Activated CD8-positive, alpha-beta T cell treated with anti-CD3 and anti-CD28 coated beads for 36 hours (primary cell): ENCODE measurements at regions of chr1 and their contacts with region 1.

Region 1: GRCh38 chr1:184805667-184806295 is 51.1 kb upstream of the EDEM3 start:
- DNase-seq: peak; percentile 91
- ATAC-seq: peak; percentile 97
- H3K4me3 Mint-ChIP-seq: no peak overlapping the region
- H3K27ac Mint-ChIP-seq: no peak overlapping the region
- H3K4me1 Mint-ChIP-seq: peaks cover 6% of the 10 kb centered on the region
- H3K27me3 Mint-ChIP-seq: no peaks in the 10 kb centered on the region
- CTCF ChIP-seq: peak; percentile 93

Region 2: DNA sequence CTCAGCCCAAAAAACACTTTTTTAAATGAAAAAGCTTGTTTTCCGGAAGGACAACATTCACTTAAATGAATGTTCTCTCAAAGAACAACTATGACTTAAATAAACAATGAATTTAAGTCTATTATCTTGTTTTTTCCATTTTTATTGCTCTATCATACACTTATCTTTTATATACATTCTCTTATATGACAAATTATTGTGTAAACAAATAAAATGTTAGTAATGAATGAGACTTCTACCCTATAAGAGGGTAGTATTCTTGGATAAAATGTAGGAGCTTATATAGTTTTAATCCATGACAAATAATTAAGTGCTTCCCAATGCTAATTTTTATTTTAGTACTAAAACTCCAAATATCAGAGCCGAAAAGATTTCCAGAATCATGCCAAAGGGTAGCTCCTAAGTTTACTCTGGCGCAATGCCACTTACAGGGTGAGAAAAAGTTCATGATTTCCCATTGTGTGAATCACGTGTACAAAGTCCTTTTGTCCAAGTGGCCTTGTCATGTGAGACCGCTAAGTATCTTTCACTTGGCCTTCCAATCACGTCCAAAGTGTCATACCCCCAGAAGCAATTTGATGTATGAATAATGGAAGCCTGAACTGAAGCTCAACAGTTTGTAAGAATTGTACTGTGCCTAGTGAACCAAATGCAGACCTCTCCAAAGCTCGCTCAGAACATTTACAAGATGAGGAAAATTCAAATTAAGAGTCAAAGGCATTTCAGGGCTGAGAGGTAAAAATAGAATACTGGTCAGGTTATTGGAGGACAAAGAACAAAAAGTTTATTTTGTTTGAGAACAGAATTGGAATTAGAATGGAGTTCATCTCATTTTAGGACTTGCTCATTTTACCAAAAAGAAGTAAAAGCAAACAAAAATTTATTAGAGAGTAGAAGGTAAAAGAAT is 475.6 kb before region 1 on chr1:
- CTCF ChIA-PET with region 1: no interaction called
- POLR2A ChIA-PET with region 1: no interaction called
- intact Hi-C with region 1: no loop called
- DNase-seq: no peak
- ATAC-seq: no peak
- H3K4me3 Mint-ChIP-seq: no peak overlapping the region
- H3K27ac Mint-ChIP-seq: no peak overlapping the region
- H3K4me1 Mint-ChIP-seq: no peaks in the 10 kb centered on the region
- H3K27me3 Mint-ChIP-seq: peaks cover 8% of the 10 kb centered on the region
- CTCF ChIP-seq: no peak

Region 3: DNA sequence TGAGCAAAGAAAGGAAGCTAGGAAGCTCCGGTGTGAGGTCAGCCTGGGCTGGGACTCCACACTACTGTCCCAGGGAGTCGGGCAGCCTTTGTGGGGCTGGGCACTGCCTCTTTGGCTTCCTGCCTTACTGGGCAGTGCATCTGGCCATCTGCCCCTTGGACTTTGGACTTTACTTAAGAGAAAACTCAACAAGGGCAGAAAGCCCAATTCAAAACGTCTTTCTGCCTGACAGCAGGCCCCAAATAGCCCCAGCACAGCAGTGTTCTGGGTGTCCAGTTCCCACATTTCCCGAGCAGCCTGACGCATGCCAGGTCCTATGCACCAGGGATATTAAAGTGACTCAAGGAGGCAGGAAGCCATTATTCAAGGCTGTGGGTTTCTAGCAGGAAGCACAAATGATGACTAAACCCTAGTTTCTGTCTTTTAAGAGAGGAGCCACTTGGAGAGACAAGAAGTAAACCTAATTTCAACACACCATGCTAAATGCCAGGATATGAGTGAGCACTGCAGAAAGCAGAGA is 13.3 kb before region 1 on chr1:
- CTCF ChIA-PET with region 1: interaction called, 18 read pairs
- POLR2A ChIA-PET with region 1: no interaction called
- intact Hi-C with region 1: no loop called
- DNase-seq: peak; percentile 12
- ATAC-seq: peak; percentile 89
- H3K4me3 Mint-ChIP-seq: no peak overlapping the region
- H3K27ac Mint-ChIP-seq: no peak overlapping the region
- H3K4me1 Mint-ChIP-seq: peaks cover 21% of the 10 kb centered on the region
- H3K27me3 Mint-ChIP-seq: no peaks in the 10 kb centered on the region
- CTCF ChIP-seq: no peak

Region 4: GRCh38 chr1:184892116-184892515 is 86.3 kb after region 1 on chr1:
- CTCF ChIA-PET with region 1: interaction called, 14 read pairs
- POLR2A ChIA-PET with region 1: interaction called, 4 read pairs
- intact Hi-C with region 1: no loop called
- DNase-seq: peak; percentile 42
- ATAC-seq: peak; percentile 68
- H3K4me3 Mint-ChIP-seq: no peak overlapping the region
- H3K27ac Mint-ChIP-seq: peak overlapping the region; percentile 73
- H3K4me1 Mint-ChIP-seq: peaks cover 34% of the 10 kb centered on the region
- H3K27me3 Mint-ChIP-seq: peaks cover 1% of the 10 kb centered on the region
- CTCF ChIP-seq: no peak

Region 5: GRCh38 chr1:184958554-184959353 is 153.0 kb after region 1 on chr1:
- CTCF ChIA-PET with region 1: interaction called, 15 read pairs
- POLR2A ChIA-PET with region 1: no interaction called
- intact Hi-C with region 1: no loop called
- DNase-seq: no peak
- ATAC-seq: no peak
- H3K4me3 Mint-ChIP-seq: no peak overlapping the region
- H3K27ac Mint-ChIP-seq: no peak overlapping the region
- H3K4me1 Mint-ChIP-seq: peaks cover 12% of the 10 kb centered on the region
- H3K27me3 Mint-ChIP-seq: no peaks in the 10 kb centered on the region
- CTCF ChIP-seq: no peak

Region 6: DNA sequence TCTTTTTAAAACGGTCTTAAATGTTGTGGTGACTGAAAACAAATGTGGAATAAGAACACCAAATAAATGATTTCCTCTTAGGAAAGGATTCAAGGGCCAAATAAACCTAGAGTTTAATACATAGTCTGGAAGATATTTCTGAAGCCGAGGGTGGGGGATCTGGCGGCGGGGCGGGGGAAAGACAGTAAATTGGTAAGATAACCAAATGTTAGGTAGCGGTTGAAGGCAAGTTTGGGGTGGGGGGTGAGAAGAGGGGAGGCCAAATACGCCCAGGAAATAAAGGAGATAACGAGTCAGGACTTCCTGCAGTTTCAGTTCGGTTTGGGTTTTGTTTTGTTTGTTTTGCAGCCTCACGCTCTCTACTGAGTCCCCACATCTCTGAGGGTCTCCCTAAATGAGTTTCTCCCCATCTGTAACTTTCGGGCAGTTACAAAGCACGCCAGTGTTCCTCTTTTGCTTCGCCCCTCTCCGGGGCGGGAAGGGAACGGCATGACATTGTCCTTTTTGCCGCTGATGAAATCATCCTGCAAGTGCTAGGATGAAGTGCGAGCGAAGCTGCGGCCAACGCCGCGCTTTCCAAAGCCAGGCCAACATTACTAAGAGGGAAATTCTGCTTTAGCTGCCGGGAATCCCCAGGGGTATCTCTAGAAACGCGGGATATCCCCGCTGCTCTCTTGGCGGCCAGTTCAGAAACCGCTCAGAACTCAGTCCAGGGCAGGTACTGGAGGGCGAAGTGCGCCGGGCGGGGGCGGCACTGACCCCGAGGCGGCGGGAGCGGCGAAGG is 167.7 kb after region 1 on chr1:
- CTCF ChIA-PET with region 1: interaction called, 65 read pairs
- POLR2A ChIA-PET with region 1: interaction called, 3 read pairs
- intact Hi-C with region 1: no loop called
- DNase-seq: peak; percentile 80
- ATAC-seq: peak; percentile 65
- H3K4me3 Mint-ChIP-seq: peak overlapping the region; percentile 80
- H3K27ac Mint-ChIP-seq: peak overlapping the region; percentile 98
- H3K4me1 Mint-ChIP-seq: peaks cover 51% of the 10 kb centered on the region
- H3K27me3 Mint-ChIP-seq: peaks cover 20% of the 10 kb centered on the region
- CTCF ChIP-seq: no peak